ENCODE measurements at regions of chr11 and their contacts with region 1.

Region 1: DNA sequence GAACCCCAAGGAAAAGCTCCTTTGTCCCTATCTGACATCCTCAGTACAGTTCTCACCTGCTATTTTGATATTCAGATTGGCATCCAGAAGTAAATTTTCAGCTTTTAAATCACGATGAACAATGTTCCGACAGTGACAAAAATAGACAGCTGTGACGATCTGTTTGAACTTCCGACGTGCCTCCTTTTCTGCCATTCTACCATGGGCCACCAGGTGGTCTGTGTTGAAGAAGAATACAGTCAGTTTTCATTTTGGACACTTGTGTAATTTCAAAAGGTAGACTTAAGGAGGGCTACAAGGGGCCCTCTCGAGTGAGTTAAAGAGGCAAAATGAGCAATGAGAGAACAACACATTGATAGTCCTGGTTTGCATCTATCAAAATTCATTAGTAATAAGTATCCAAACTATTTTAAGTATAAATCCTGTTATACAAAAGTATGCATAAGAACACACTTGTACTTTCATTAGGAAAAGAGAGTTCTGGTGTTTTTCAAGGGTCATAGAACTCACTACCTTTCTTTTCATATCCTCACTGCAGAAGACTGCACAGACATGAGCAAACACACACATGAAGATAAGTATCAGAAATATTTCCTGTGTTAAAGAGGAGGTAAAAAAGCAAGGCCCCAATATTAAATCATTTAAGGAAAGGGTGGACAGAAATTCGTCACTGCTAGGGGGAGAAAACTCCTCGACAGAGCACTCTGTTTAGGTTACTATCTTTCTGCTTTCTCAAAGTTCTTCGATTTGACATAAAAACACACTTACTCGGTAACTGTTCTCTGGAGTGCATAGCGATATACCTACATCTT is 89.9 kb upstream of the APOA1 start:
- DNase-seq: peak; percentile 72
- ATAC-seq: peak; percentile 33
- H3K4me3 Mint-ChIP-seq: peak overlapping the region; percentile 18
- H3K27ac Mint-ChIP-seq: peak overlapping the region; percentile 49
- H3K4me1 Mint-ChIP-seq: peaks cover 74% of the 10 kb centered on the region
- H3K27me3 Mint-ChIP-seq: no peaks in the 10 kb centered on the region

Region 2: DNA sequence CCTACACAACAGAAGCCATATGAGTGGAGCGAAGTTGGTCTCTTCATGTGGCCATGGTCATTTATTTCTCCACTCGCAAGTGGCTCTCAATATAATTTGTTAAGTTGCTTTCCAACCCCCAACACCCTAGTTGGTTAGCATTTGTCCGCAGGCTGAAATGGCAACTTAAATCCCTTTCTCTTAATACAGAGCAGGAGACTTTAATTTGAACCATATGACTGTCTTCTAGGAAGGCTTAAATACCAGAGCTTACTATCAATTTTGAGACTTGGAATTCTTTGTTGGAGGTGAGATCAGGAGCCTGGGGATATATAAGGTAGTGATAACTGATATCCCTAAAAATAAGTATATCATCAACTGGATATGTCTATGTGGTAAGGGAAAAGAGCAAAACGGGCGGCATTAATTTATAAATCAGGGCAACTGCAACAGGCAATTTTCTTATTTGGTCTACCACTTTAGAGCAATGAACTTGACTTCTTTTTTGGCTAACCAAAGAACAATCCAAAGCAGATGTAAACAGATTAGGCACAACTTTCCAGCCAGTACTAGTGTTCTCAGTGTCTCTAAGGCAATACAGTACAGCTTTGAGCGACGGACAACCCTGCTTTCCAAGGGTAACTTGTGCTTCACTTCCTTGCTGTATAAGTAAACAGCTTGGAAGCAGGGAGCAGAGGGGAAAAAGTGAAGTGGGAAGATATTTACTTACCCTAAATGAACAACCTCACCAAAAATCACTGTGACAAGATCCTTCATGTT is 15.2 kb before region 1 on chr11:
- CTCF ChIA-PET with region 1: interaction called, 14 read pairs
- POLR2A ChIA-PET with region 1: no interaction called
- intact Hi-C with region 1: no loop called
- DNase-seq: no peak
- ATAC-seq: no peak
- H3K4me3 Mint-ChIP-seq: no peak overlapping the region
- H3K27ac Mint-ChIP-seq: no peak overlapping the region
- H3K4me1 Mint-ChIP-seq: peaks cover 20% of the 10 kb centered on the region
- H3K27me3 Mint-ChIP-seq: no peaks in the 10 kb centered on the region

Region 3: DNA sequence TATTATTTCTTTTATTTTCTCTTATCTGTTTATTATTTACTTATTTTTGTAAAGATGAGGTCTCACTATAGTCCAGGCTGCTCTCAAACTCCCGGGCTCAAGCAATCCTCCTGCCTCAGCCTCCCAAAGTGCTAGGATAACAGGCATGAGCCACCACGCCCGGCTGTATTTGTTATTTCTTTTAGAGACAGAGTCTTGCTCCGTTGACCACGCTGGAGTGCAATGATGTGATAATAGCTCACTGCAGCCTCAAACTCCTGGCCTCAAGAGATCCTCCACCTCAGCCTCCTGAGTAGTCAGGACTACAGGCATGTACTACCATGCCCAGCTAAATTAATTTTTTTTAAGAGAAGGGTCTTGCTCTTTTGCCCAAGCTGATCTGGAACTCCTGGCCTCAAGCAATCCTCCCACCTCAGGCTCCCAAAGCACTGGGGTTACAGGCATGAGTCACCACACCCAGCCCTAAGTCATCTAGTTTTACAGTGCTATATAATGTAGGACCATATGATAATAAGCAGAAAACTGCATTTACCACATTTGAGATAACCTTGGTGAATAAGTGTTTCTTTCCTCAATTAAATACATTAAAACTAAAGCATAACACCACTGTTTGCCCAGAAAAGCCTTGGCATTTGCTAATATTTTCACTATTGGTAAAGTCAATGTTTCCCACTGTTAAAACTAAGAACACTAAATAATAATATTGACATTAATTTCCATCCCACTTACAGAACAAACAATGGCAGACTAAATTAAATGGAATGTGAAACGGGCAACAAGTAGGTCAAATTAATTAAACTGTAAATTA is 43.3 kb after region 1 on chr11:
- CTCF ChIA-PET with region 1: no interaction called
- POLR2A ChIA-PET with region 1: no interaction called
- intact Hi-C with region 1: loop called in 1 of 2 experiments (anchors 2 kb)
- DNase-seq: peak; percentile 24
- ATAC-seq: peak; percentile 49
- H3K4me3 Mint-ChIP-seq: no peak overlapping the region
- H3K27ac Mint-ChIP-seq: no peak overlapping the region
- H3K4me1 Mint-ChIP-seq: peaks cover 23% of the 10 kb centered on the region
- H3K27me3 Mint-ChIP-seq: no peaks in the 10 kb centered on the region

Region 4: GRCh38 chr11:117072517-117073461 is 145.4 kb after region 1 on chr11:
- CTCF ChIA-PET with region 1: interaction called, 4 read pairs
- POLR2A ChIA-PET with region 1: interaction called, 3 read pairs
- intact Hi-C with region 1: loop called in 1 of 2 experiments (anchors 5 kb)
- DNase-seq: no peak
- ATAC-seq: peak; percentile 59
- H3K4me3 Mint-ChIP-seq: peak overlapping the region; percentile 15
- H3K27ac Mint-ChIP-seq: peak overlapping the region; percentile 42
- H3K4me1 Mint-ChIP-seq: peaks cover 61% of the 10 kb centered on the region
- H3K27me3 Mint-ChIP-seq: no peaks in the 10 kb centered on the region

Region 5: GRCh38 chr11:117098269-117099232 is 171.2 kb after region 1 on chr11 and contains the start of gene SIK3:
- CTCF ChIA-PET with region 1: interaction called, 10 read pairs
- POLR2A ChIA-PET with region 1: interaction called, 4 read pairs
- intact Hi-C with region 1: loop called (anchors 1 to 2 kb)
- DNase-seq: peak; percentile 96
- ATAC-seq: peak; percentile 71
- H3K4me3 Mint-ChIP-seq: peak within 1 kb of the TSS; percentile 93
- H3K27ac Mint-ChIP-seq: peak within 1 kb of the TSS; percentile 93
- H3K4me1 Mint-ChIP-seq: peaks cover 46% of the 10 kb centered on the region
- H3K27me3 Mint-ChIP-seq: no peaks in the 10 kb centered on the region
- total RNA-seq, gene SIK3: 23.6 to 25.3 TPM

Measured in activated CD4-positive, alpha-beta T cell treated with anti-CD3 and anti-CD28 coated beads for 36 hours (primary cell).